Transverse colon (tissue), 4 donors: ENCODE measurements at regions of chr12 and their contacts with region 1.

Region 1: DNA sequence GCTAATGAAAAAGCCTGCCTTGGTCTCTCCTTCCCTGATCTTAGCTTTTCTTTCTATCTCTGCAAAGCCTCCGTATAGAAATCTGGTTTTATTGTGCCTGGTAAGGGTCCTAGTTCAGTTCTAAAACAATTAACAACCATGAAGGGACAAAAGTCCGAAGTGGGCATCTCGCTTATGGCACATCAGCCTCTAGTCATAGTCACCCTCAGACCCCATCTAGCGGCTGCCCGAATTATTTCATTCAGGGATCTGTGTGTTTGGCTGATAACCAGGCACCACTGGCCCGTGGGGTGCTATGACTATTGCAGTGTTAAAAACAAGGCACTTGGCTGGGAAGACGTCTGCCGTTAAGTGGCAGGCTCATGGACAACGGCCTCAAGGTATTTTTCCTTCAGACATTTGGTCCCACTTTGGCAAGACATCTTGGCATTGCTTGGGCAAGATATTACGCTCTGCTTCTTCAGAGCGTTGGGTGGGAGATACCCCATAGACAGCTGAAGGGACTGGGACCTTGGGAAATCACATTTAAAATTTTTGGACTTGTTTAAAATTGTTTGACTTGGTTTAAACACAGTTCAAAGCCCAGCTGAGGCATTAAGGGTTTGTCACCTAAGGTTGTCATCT is 87.1 kb downstream of the SINHCAF start:
- DNase-seq: peak; percentile 66
- H3K4me3 ChIP-seq: no peak overlapping the region
- H3K27ac ChIP-seq: no peak overlapping the region
- H3K4me1 ChIP-seq: peaks cover 0 to 13% (median 6%) of the 10 kb centered on the region in 4 donors
- H3K27me3 ChIP-seq: peaks cover 4% of the 10 kb centered on the region
- CTCF ChIP-seq: peak; percentile 63 to 73 (median 68)
- EP300 ChIP-seq: no peak
- POLR2A ChIP-seq: no peak

Region 2: DNA sequence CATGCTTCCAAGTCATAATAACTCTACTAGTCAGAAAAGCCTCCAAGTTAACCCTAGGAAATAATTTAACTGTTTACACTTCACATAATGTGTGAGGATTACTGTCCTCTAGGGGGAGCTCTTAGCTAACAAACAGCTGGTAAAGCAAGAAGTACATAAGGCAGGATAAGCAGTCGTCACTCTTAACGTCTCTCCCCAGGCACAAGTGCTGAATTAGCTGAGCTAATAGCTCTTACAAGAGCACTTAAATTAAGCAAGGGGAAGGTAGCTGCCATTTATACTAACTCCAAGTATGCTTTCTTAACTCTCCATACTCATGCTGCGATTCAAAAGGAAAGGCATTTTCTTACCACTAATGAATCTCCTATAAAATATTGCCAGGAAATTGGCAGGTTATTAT is 391.6 kb before region 1 on chr12:
- in situ Hi-C with region 1: loop called in 3 of 4 experiments (anchors 10 to 25 kb)
- intact Hi-C with region 1: no loop called
- DNase-seq: no peak
- H3K4me3 ChIP-seq: no peak overlapping the region
- H3K27ac ChIP-seq: no peak overlapping the region
- H3K4me1 ChIP-seq: peaks cover 0 to 5% (median 3%) of the 10 kb centered on the region in 4 donors
- H3K27me3 ChIP-seq: no peaks in the 10 kb centered on the region
- CTCF ChIP-seq: peak; percentile 63 to 76 (median 68)
- EP300 ChIP-seq: no peak
- POLR2A ChIP-seq: no peak

Region 3: DNA sequence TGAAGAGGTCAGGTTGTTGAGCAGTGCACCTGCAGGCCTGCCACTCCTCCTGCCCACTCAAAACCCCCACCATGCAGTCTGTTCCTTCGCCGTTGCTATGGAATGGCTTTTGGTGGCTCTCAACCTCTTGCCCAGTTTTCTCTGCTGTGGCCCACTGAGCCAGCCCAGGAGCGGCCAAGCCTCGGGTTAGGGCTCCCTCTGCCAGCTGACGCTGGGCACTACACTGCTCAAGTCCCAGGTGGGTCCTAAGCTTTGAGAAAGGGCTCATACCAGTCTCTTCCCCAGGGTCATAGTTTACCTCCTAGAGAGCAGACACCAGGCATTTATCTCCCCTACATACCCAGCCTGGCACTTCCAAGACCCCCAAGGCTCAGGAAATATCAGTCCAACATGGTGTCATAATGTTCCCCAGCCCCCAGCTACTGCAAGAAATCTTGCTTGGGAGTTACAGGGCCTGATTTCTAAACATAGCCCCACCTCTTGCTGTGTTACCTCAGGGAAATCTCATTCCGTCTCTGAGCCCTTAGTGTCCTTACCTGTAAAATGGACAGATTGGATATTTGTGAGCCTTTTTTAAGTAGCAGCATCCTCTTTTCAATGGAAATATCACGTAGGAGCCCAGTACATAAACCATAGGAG is 252.9 kb before region 1 on chr12:
- in situ Hi-C with region 1: loop called in 1 of 4 experiments (anchors 25 kb)
- intact Hi-C with region 1: no loop called
- DNase-seq: peak; percentile 23
- H3K4me3 ChIP-seq: no peak overlapping the region
- H3K27ac ChIP-seq: no peak overlapping the region
- H3K4me1 ChIP-seq: peaks cover 0 to 10% (median 4%) of the 10 kb centered on the region in 4 donors
- H3K27me3 ChIP-seq: no peaks in the 10 kb centered on the region
- CTCF ChIP-seq: peak; percentile 39 to 55 (median 48)
- EP300 ChIP-seq: no peak
- POLR2A ChIP-seq: no peak

Region 4: GRCh38 chr12:31117203-31118011 is 121.5 kb before region 1 on chr12:
- in situ Hi-C with region 1: loop called in 2 of 4 experiments (anchors 25 kb)
- intact Hi-C with region 1: no loop called
- DNase-seq: peak; percentile 53
- H3K4me3 ChIP-seq: peak overlapping the region; percentile 29 to 59 (median 32)
- H3K27ac ChIP-seq: no peak overlapping the region
- H3K4me1 ChIP-seq: peaks cover 5 to 33% (median 18%) of the 10 kb centered on the region in 4 donors
- H3K27me3 ChIP-seq: peaks cover 39% of the 10 kb centered on the region
- CTCF ChIP-seq: peak; percentile 41 to 80 (median 69)
- EP300 ChIP-seq: no peak
- POLR2A ChIP-seq: no peak

Region 5: GRCh38 chr12:31629756-31630732 is 391.2 kb after region 1 on chr12:
- in situ Hi-C with region 1: loop called in 1 of 4 experiments (anchors 25 kb)
- intact Hi-C with region 1: no loop called
- DNase-seq: no peak
- H3K4me3 ChIP-seq: no peak overlapping the region
- H3K27ac ChIP-seq: no peak overlapping the region
- H3K4me1 ChIP-seq: peaks cover 0 to 7% (median 0%) of the 10 kb centered on the region in 4 donors
- H3K27me3 ChIP-seq: no peaks in the 10 kb centered on the region
- CTCF ChIP-seq: no peak
- EP300 ChIP-seq: no peak
- POLR2A ChIP-seq: no peak